Calu3 (cell line): ENCODE measurements at regions of chr17 and their contacts with region 1.

Region 1: GRCh38 chr17:39730095-39730921 is at the start of gene MIEN1:
- DNase-seq: no peak
- H3K4me3 Mint-ChIP-seq: peak within 1 kb of the TSS; percentile 79
- H3K27ac Mint-ChIP-seq: peak within 1 kb of the TSS; percentile 90
- H3K4me1 Mint-ChIP-seq: peaks cover 34% of the 10 kb centered on the region
- H3K27me3 Mint-ChIP-seq: no peaks in the 10 kb centered on the region
- CTCF ChIP-seq: no peak
- total RNA-seq, gene MIEN1: 2,121 and 2,217 TPM in 2 replicates

Region 2: DNA sequence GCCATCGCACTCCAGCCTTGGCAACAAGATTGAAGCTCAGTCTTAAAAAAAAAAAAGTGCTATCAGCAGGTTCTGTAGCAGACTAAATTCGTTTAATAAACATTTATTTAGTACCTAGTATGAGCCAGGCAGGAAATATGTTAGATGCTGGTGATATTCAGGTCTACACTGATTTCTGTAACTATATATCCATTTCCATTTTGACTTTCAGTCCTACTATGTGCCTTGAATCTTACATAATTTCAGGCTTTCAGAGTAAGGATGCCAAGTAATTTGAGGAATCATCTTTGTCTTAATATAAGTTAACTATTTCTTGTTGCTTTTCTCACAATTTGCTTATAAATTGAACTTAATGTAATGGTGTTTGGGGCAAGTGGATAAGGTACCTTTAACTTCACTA is 222.8 kb before region 1 on chr17:
- CTCF ChIA-PET with region 1: no interaction called
- intact Hi-C with region 1: no loop called
- DNase-seq: no peak
- H3K4me3 Mint-ChIP-seq: no peak overlapping the region
- H3K27ac Mint-ChIP-seq: no peak overlapping the region
- H3K4me1 Mint-ChIP-seq: no peaks in the 10 kb centered on the region
- H3K27me3 Mint-ChIP-seq: no peaks in the 10 kb centered on the region
- CTCF ChIP-seq: no peak

Region 3: GRCh38 chr17:39541652-39542051 is 188.7 kb before region 1 on chr17:
- CTCF ChIA-PET with region 1: no interaction called
- intact Hi-C with region 1: no loop called
- DNase-seq: no peak
- H3K4me3 Mint-ChIP-seq: no peak overlapping the region
- H3K27ac Mint-ChIP-seq: no peak overlapping the region
- H3K4me1 Mint-ChIP-seq: peaks cover 24% of the 10 kb centered on the region
- H3K27me3 Mint-ChIP-seq: no peaks in the 10 kb centered on the region
- CTCF ChIP-seq: no peak

Region 4: GRCh38 chr17:39676198-39676819 is 54.0 kb before region 1 on chr17:
- CTCF ChIA-PET with region 1: interaction called, 34,714 read pairs
- intact Hi-C with region 1: loop called (anchors 1 kb)
- DNase-seq: peak; percentile 100
- H3K4me3 Mint-ChIP-seq: peak overlapping the region; percentile 3
- H3K27ac Mint-ChIP-seq: peak overlapping the region; percentile 62
- H3K4me1 Mint-ChIP-seq: peaks cover 91% of the 10 kb centered on the region
- H3K27me3 Mint-ChIP-seq: peaks cover 6% of the 10 kb centered on the region
- CTCF ChIP-seq: no peak

Region 5: GRCh38 chr17:39800540-39800939 is 70.2 kb after region 1 on chr17:
- CTCF ChIA-PET with region 1: interaction called, 117 read pairs
- intact Hi-C with region 1: no loop called
- DNase-seq: peak; percentile 85
- H3K4me3 Mint-ChIP-seq: no peak overlapping the region
- H3K27ac Mint-ChIP-seq: no peak overlapping the region
- H3K4me1 Mint-ChIP-seq: peaks cover 17% of the 10 kb centered on the region
- H3K27me3 Mint-ChIP-seq: no peaks in the 10 kb centered on the region
- CTCF ChIP-seq: no peak

Region 6: GRCh38 chr17:39845052-39845846 is 114.9 kb after region 1 on chr17:
- CTCF ChIA-PET with region 1: interaction called, 70 read pairs
- intact Hi-C with region 1: no loop called
- DNase-seq: peak; percentile 81
- H3K4me3 Mint-ChIP-seq: no peak overlapping the region
- H3K27ac Mint-ChIP-seq: no peak overlapping the region
- H3K4me1 Mint-ChIP-seq: peaks cover 10% of the 10 kb centered on the region
- H3K27me3 Mint-ChIP-seq: no peaks in the 10 kb centered on the region
- CTCF ChIP-seq: no peak

Region 7: GRCh38 chr17:39916918-39917317 is 186.6 kb after region 1 on chr17:
- CTCF ChIA-PET with region 1: interaction called, 275 read pairs
- intact Hi-C with region 1: no loop called
- DNase-seq: peak; percentile 94
- H3K4me3 Mint-ChIP-seq: no peak overlapping the region
- H3K27ac Mint-ChIP-seq: no peak overlapping the region
- H3K4me1 Mint-ChIP-seq: peaks cover 24% of the 10 kb centered on the region
- H3K27me3 Mint-ChIP-seq: no peaks in the 10 kb centered on the region
- CTCF ChIP-seq: no peak

Region 8: GRCh38 chr17:40026816-40027613 is 296.7 kb after region 1 on chr17:
- CTCF ChIA-PET with region 1: interaction called, 26 read pairs
- intact Hi-C with region 1: no loop called
- DNase-seq: peak; percentile 100
- H3K4me3 Mint-ChIP-seq: no peak overlapping the region
- H3K27ac Mint-ChIP-seq: no peak overlapping the region
- H3K4me1 Mint-ChIP-seq: peaks cover 30% of the 10 kb centered on the region
- H3K27me3 Mint-ChIP-seq: no peaks in the 10 kb centered on the region
- CTCF ChIP-seq: no peak

Region 9: GRCh38 chr17:40551879-40552768 is 821.8 kb after region 1 on chr17:
- CTCF ChIA-PET with region 1: no interaction called
- intact Hi-C with region 1: no loop called
- DNase-seq: no peak
- H3K4me3 Mint-ChIP-seq: no peak overlapping the region
- H3K27ac Mint-ChIP-seq: no peak overlapping the region
- H3K4me1 Mint-ChIP-seq: peaks cover 20% of the 10 kb centered on the region
- H3K27me3 Mint-ChIP-seq: peaks cover 60% of the 10 kb centered on the region
- CTCF ChIP-seq: no peak